ENCODE measurements at regions of chr20 and their contacts with region 1.

Region 1: GRCh38 chr20:36199345-36200257 is 36.7 kb upstream of the AAR2 start:
- DNase-seq: peak; percentile 80
- ATAC-seq: peak; percentile 77 to 85

Region 2: GRCh38 chr20:36155991-36156390 is 43.6 kb before region 1 on chr20:
- intact Hi-C with region 1: loop called in 1 of 2 experiments (anchors 2 kb)
- DNase-seq: no peak
- ATAC-seq: no peak

Region 3: DNA sequence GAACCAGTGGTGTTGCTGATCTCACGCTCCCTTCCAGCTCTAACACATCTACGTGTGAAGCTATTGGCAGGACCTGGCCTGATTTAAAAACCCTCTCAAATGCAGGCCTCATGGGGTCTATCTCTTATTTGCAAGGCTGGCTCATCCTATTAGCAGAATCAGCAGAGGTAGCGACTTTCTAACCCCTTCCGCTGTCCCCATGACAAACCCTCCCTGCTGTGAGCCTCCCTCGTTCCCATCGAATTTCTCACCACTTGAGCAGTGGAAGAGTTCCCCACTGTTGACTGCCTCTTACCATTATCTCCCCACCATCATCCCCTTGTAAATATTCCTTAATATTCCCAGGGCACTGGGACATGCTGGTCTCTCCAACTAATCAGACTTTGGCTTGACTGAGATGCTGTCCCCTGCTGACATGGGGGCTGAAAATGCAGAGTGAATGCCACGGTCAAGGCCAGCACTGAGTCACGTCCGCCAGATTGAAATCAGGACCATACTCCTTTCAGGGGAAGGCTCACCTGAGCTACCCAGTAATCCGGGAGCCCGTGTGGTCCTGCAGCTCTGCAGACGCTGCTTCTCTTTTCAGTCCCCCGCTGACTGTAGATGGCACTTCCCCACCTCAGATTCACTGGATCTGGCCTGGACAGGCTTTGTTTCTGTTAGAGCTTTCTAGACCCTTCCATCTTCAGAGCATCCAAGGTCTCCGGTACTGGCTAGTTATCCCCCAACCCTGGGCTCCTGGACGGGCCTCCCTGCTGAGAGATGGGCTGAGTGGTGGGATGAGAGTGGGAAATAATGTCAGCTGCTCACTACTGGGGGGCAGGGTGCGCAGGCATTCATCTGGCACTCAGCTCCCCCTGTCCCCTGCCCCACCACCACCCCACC is 59.8 kb after region 1 on chr20:
- intact Hi-C with region 1: no loop called
- DNase-seq: no peak
- ATAC-seq: no peak

Region 4: DNA sequence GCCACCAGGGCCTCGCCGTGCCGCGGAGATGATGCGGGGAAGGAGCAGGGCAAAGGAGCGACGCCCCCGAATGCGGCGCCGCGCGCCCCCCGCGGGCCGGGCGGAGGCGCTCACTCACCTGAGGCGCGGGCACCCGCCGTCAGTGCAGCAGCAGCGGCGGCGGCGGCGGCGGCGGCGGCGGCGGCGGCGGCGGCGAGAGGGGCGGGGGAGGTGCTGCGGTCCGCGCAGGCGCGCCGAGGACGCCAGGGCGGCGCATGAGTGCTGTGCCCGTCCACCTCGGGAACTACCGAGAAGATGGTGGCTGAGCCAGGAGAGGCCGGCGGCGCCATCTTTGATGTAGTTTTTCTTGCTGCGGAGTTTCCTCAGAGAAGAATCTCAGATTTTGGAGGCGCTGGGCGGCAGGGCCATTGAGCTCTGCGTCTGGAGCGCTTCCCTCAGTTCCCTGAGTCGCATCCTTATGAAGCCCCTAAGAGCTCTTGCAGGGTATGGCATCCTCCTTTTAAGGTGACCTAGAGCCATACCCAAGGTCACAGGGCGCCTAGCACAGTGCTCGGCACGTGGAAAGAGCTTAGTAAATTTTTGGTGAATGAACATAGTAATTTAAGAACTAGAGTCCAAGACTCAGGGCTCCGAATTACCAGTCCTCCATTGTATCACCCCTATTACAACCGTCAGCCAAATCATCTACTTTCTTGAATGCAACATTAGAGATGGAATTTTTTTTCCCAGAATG is 546.5 kb after region 1 on chr20 and contains the start of gene NDRG3:
- intact Hi-C with region 1: no loop called
- DNase-seq: peak; percentile 95
- ATAC-seq: peak; percentile 94 to 97
- total RNA-seq, gene NDRG3: 25.8 to 32.7 TPM

Measured in left cardiac atrium (tissue), 4 donors.